Vagina (tissue), 2 donors: ENCODE measurements at regions of chr5 and their contacts with region 1.

Region 1: GRCh38 chr5:134411546-134412266 is at the start of gene CDKN2AIPNL:
- DNase-seq: peak in 1 of 2 donors; percentile 89
- H3K4me3 ChIP-seq: peak within 1 kb of the TSS; percentile 79 to 87
- H3K27ac ChIP-seq: peak within 1 kb of the TSS; percentile 85
- H3K4me1 ChIP-seq: peaks cover 35% of the 10 kb centered on the region
- H3K27me3 ChIP-seq: no peaks in the 10 kb centered on the region
- CTCF ChIP-seq: peak; percentile 24 to 100 (median 80)
- POLR2A ChIP-seq: no peak
- total RNA-seq, gene CDKN2AIPNL: 18.4 TPM

Region 2: GRCh38 chr5:134370871-134371833 is 40.6 kb before region 1 on chr5 and contains the start of gene UBE2B:
- intact Hi-C with region 1: no loop called
- DNase-seq: peak; percentile 99 to 100
- H3K4me3 ChIP-seq: peak within 1 kb of the TSS; percentile 76 to 81
- H3K27ac ChIP-seq: peak within 1 kb of the TSS; percentile 99
- H3K4me1 ChIP-seq: peaks cover 38% of the 10 kb centered on the region
- H3K27me3 ChIP-seq: no peaks in the 10 kb centered on the region
- CTCF ChIP-seq: peak in 1 of 3 experiments; percentile 17
- POLR2A ChIP-seq: peak in 1 of 2 donors; percentile 82
- total RNA-seq, gene UBE2B: 68.3 TPM

Region 3: GRCh38 chr5:134577796-134578363 is 166.2 kb after region 1 on chr5:
- intact Hi-C with region 1: loop called (anchors 5 kb)
- DNase-seq: no peak
- H3K4me3 ChIP-seq: no peak overlapping the region
- H3K27ac ChIP-seq: no peak overlapping the region
- H3K4me1 ChIP-seq: peaks cover 28% of the 10 kb centered on the region
- H3K27me3 ChIP-seq: no peaks in the 10 kb centered on the region
- CTCF ChIP-seq: peak; percentile 62 to 80 (median 76)
- POLR2A ChIP-seq: no peak